Endothelial cell of umbilical vein (primary cell): ENCODE measurements at regions of chr3 and their contacts with region 1.

Region 1: GRCh38 chr3:129052675-129053074 is 7.9 kb upstream of the GP9 start:
- DNase-seq: peak; percentile 73
- H3K4me3 ChIP-seq: no peak overlapping the region
- H3K27ac ChIP-seq: no peak overlapping the region
- H3K4me1 ChIP-seq: peaks cover 15% of the 10 kb centered on the region
- H3K27me3 ChIP-seq: no peaks in the 10 kb centered on the region
- CTCF ChIP-seq: no peak
- POLR2A ChIP-seq: no peak

Region 2: GRCh38 chr3:128956440-128956839 is 96.2 kb before region 1 on chr3:
- CTCF ChIA-PET with region 1: no interaction called
- POLR2A ChIA-PET with region 1: no interaction called
- dilution Hi-C with region 1: no loop called
- intact Hi-C with region 1: no loop called
- DNase-seq: no peak
- H3K4me3 ChIP-seq: no peak overlapping the region
- H3K27ac ChIP-seq: no peak overlapping the region
- H3K4me1 ChIP-seq: no peaks in the 10 kb centered on the region
- H3K27me3 ChIP-seq: peaks cover 3 to 9% of the 10 kb centered on the region in 2 experiments
- CTCF ChIP-seq: no peak
- POLR2A ChIP-seq: no peak

Region 3: GRCh38 chr3:129003578-129004160 is 49.0 kb before region 1 on chr3:
- CTCF ChIA-PET with region 1: interaction called, 13 read pairs
- POLR2A ChIA-PET with region 1: no interaction called
- dilution Hi-C with region 1: no loop called
- intact Hi-C with region 1: no loop called
- DNase-seq: no peak
- H3K4me3 ChIP-seq: no peak overlapping the region
- H3K27ac ChIP-seq: no peak overlapping the region
- H3K4me1 ChIP-seq: peaks cover 15% of the 10 kb centered on the region
- H3K27me3 ChIP-seq: peaks cover 26 to 44% of the 10 kb centered on the region in 2 experiments
- CTCF ChIP-seq: peak in 1 of 2 donors; percentile 12
- POLR2A ChIP-seq: no peak

Region 4: GRCh38 chr3:129026728-129027543 is 25.7 kb before region 1 on chr3:
- CTCF ChIA-PET with region 1: interaction called, 25 read pairs
- POLR2A ChIA-PET with region 1: no interaction called
- dilution Hi-C with region 1: no loop called
- intact Hi-C with region 1: loop called (anchors 1 kb)
- DNase-seq: peak; percentile 91
- H3K4me3 ChIP-seq: peak overlapping the region; percentile 30 to 49 (median 45)
- H3K27ac ChIP-seq: no peak overlapping the region
- H3K4me1 ChIP-seq: peaks cover 10% of the 10 kb centered on the region
- H3K27me3 ChIP-seq: no peaks in the 10 kb centered on the region
- CTCF ChIP-seq: peak; percentile 70 to 86
- POLR2A ChIP-seq: peak; percentile 43

Region 5: DNA sequence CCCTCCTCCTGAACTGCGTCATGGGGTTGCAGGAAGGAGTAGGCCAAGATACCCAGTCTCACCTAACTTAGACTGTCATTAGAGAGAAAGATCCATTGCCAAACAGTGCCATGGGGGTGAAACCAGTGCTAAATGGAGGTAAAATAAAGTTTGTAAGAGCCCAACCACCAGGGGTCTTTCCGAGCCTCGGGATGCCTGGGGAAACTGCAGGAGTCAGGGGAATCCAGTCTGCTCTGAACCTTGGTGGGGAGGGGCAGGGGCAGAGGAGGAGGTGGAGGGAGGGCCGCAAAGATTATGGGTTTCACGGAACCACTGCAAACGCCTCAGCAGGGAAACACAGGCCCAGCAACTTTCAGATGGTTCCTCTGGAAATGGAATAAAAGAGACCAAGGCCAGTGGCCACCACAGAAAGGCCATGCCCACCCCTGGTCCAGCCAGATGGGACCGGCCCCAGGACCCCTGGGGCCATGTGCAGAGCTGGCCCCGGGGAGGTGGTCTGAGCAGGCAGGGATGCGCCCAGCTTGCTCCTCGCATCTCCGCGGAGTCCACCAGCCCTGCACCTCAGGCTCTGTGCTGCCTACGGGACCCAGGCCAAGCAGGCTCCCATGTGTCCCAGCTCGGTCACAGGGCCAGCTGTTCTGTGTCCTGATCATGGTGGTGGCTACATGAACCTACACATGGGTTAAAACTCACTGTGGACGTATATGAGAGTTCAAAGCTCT is 11.9 kb before region 1 on chr3:
- CTCF ChIA-PET with region 1: interaction called, 35 read pairs
- POLR2A ChIA-PET with region 1: no interaction called
- dilution Hi-C with region 1: no loop called
- intact Hi-C with region 1: no loop called
- DNase-seq: no peak
- H3K4me3 ChIP-seq: no peak overlapping the region
- H3K27ac ChIP-seq: no peak overlapping the region
- H3K4me1 ChIP-seq: peaks cover under 1% of the 10 kb centered on the region
- H3K27me3 ChIP-seq: no peaks in the 10 kb centered on the region
- CTCF ChIP-seq: no peak
- POLR2A ChIP-seq: no peak

Region 6: DNA sequence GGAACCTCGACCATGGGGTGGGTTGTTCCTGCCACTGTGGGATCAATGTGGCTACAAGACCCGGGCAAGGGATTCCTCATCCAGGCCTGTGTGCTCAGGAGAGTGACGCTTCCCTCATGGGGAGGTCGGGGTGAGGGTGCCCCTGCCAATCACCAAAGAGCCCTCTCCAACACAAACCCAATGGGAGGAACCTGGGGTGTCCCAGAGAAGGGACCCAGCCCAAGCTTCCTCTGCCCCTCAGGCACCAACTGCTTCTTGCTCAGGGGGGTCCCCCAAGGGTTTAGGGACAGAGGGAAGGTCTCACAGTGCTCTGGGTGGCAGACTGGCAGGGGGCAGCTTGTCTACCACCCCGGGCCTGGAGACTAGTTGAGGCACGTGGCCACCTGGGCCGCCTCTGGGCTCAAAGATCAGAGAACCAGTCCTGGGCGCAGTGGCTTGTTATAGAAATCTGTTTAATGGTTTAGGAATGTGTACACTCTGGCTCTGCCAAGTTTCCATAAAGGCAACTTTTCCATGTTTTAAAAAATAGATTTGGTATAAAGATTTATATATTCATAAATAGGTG is 34.5 kb after region 1 on chr3:
- CTCF ChIA-PET with region 1: interaction called, 24 read pairs
- POLR2A ChIA-PET with region 1: interaction called, 6 read pairs
- dilution Hi-C with region 1: no loop called
- intact Hi-C with region 1: no loop called
- DNase-seq: peak; percentile 57
- H3K4me3 ChIP-seq: no peak overlapping the region
- H3K27ac ChIP-seq: peak overlapping the region; percentile 11
- H3K4me1 ChIP-seq: peaks cover 3% of the 10 kb centered on the region
- H3K27me3 ChIP-seq: no peaks in the 10 kb centered on the region
- CTCF ChIP-seq: no peak
- POLR2A ChIP-seq: no peak

Region 7: DNA sequence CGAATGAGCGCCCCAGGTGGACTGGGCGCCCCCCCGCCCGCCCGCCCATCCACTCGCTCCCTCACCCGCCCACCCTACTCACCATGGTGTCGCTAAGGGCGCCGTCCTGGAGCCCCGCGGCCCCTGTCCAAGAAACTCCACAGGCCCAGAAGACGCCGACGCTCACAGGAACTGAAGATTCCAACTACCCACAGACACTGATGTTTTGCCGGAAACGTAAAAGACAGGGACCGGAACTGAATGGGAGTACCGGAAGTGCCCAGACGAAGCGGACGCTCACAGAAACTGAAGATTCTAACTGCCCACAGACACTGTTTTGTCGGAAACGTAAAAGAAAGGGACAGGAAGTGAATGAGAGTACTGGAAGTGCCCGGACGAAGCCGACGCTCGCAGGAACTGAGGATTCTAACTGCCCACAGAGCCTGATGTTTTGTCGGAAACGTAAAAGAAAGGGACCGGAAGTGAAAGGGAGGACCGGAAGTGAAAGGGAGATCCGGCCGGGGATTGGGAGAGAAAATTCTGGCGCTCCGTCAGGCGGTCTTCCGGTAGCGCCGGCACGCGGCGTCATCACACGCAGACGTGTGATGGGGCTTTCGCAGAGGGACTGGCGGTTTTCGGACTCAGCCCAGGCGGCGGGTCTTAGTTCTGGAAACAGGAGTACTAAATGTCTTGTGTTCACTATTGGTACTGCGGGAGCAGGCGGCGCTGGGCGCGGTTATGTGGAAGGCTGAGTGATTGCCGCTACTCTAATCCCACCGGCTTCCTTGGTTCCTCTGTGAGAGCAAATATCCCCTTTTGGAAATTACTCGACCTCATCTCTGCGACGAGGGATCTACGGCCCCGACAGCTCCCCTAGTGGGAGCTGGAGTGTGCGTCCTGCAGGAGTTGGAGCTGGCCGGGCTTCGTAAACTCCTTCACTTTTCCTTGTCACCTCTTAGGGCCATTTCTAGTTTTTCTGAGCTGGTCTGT is 108.5 kb after region 1 on chr3 and contains the start of gene ISY1:
- CTCF ChIA-PET with region 1: interaction called, 5 read pairs
- POLR2A ChIA-PET with region 1: no interaction called
- dilution Hi-C with region 1: no loop called
- intact Hi-C with region 1: loop called (anchors 1 kb)
- DNase-seq: peak; percentile 95
- H3K4me3 ChIP-seq: peak within 1 kb of the TSS; percentile 82 to 100 (median 99)
- H3K27ac ChIP-seq: peak within 1 kb of the TSS; percentile 86
- H3K4me1 ChIP-seq: peaks cover 19% of the 10 kb centered on the region
- H3K27me3 ChIP-seq: no peaks in the 10 kb centered on the region
- CTCF ChIP-seq: peak; percentile 88 to 93
- POLR2A ChIP-seq: peak; percentile 99
- total RNA-seq, gene ISY1: 50.6 and 59.4 TPM in 2 replicates